ENCODE measurements at regions of chr10 and their contacts with region 1.

Region 1: GRCh38 chr10:11684717-11685645 is 57.2 kb upstream of the ECHDC3 start:
- DNase-seq: peak; percentile 45 to 89 (median 83)
- ATAC-seq: peak; percentile 86
- H3K4me3 ChIP-seq: peak overlapping the region; percentile 49
- H3K4me3 Mint-ChIP-seq: peak overlapping the region; percentile 82 to 91 (median 89)
- H3K27ac ChIP-seq: peak overlapping the region; percentile 78
- H3K27ac Mint-ChIP-seq: peak overlapping the region; percentile 92 to 99 (median 97)
- H3K4me1 ChIP-seq: peaks cover 26 to 51% of the 10 kb centered on the region in 2 donors
- H3K4me1 Mint-ChIP-seq: peaks cover 25 to 85% (median 78%) of the 10 kb centered on the region in 7 donors
- H3K27me3 ChIP-seq: no peaks in the 10 kb centered on the region
- H3K27me3 Mint-ChIP-seq: peaks cover 0 to 67% (median 0%) of the 10 kb centered on the region in 5 donors

Region 2: GRCh38 chr10:11403116-11403515 is 281.9 kb before region 1 on chr10:
- CTCF ChIA-PET with region 1: no interaction called
- POLR2A ChIA-PET with region 1: no interaction called
- intact Hi-C with region 1: loop called in 1 of 2 experiments (anchors 2 kb)
- DNase-seq: peak; percentile 25 to 90 (median 84)
- ATAC-seq: peak; percentile 95
- H3K4me3 ChIP-seq: peak overlapping the region; percentile 45
- H3K4me3 Mint-ChIP-seq: peak overlapping the region; percentile 74 to 87 (median 80)
- H3K27ac ChIP-seq: peak overlapping the region; percentile 57
- H3K27ac Mint-ChIP-seq: peak overlapping the region; percentile 89 to 98 (median 93)
- H3K4me1 ChIP-seq: peaks cover 45 to 48% of the 10 kb centered on the region in 2 donors
- H3K4me1 Mint-ChIP-seq: peaks cover 46 to 89% (median 81%) of the 10 kb centered on the region in 7 donors
- H3K27me3 ChIP-seq: no peaks in the 10 kb centered on the region
- H3K27me3 Mint-ChIP-seq: no peaks in the 10 kb centered on the region

Region 3: DNA sequence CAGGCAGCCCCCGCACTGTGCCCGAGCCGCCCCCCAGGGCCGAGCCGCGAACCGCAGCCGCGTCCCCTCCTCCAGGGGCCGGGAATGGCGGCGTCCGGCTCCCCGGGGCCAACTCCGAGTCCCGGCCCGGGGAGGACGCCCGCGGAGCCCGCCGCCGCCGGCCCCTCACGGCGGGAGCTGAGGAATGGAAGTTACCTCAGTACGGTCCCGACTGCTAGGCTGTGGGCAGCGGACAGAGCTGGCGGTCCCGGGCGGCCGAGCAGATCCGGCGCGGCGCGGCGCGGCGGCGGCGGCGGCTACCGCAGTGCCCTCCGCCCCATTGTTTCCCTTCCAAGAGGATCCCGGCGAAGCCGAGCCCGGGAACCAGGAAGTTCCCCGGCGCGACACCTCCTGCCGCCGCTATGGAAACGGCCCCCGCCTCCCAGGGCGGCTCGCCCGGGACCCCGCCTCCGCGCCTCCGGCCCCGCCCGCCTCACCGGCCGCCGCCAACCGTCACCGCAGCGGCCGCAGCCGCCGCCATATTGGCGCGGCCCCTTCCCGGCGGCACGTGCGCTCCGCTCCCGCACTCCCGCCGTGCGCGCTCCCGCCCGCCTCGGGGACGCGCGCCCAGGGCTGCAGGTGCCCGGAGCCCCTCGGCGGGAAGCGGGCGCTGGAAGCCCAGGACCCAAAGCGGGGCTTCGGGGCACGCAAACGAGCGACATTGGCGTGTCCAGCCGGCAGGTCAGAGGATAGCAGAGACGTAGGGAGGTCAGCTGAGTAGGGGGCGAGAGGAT is 73.5 kb before region 1 on chr10 and contains the start of gene USP6NL:
- CTCF ChIA-PET with region 1: interaction called, 3 read pairs
- POLR2A ChIA-PET with region 1: interaction called, 7 read pairs
- intact Hi-C with region 1: loop called (anchors 1 to 5 kb)
- DNase-seq: peak; percentile 44 to 75 (median 59)
- ATAC-seq: peak; percentile 84
- H3K4me3 ChIP-seq: peak within 1 kb of the TSS; percentile 70
- H3K4me3 Mint-ChIP-seq: peak within 1 kb of the TSS; percentile 86 to 98 (median 94)
- H3K27ac ChIP-seq: peak within 1 kb of the TSS; percentile 69
- H3K27ac Mint-ChIP-seq: peak within 1 kb of the TSS; percentile 62 to 97 (median 94)
- H3K4me1 ChIP-seq: peaks cover 0 to 9% of the 10 kb centered on the region in 2 donors
- H3K4me1 Mint-ChIP-seq: peaks cover 24 to 60% (median 50%) of the 10 kb centered on the region in 7 donors
- H3K27me3 ChIP-seq: no peaks in the 10 kb centered on the region
- H3K27me3 Mint-ChIP-seq: peaks cover 0 to 62% (median 0%) of the 10 kb centered on the region in 5 donors
- total RNA-seq, gene USP6NL: 0.70 to 6.6 (median 5.0) TPM

Region 4: DNA sequence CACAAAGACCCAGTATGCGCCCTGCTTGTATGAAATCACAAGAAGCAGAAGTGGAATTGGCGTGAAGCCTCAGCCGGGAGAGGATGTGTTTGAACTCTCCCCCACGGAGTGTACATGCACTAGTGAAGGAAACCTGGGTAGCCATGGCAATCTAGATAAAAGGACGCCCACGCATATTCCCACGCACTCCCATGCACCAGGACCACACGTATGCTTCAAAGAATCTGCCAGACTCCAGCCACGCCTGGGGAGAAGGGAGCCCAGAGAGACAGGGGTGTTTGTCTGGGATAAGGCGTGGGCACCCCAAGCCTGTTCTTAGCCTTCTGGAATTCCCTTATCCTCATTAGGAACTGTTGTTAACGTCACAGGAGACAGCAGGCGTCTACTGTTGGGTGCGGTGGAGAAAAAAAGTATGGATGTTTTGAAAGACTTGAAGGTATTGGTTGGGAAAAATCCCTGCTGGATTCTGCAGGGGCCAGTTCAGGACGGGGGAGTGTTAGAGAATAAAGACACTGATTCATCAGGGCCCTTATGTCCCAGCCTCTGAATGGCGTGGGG is 28.3 kb after region 1 on chr10:
- CTCF ChIA-PET with region 1: no interaction called
- POLR2A ChIA-PET with region 1: interaction called, 19 read pairs
- intact Hi-C with region 1: loop called (anchors 1 kb)
- DNase-seq: no peak
- ATAC-seq: no peak
- H3K4me3 ChIP-seq: no peak overlapping the region
- H3K4me3 Mint-ChIP-seq: peak overlapping the region in 1 of 10 donors; percentile 7
- H3K27ac ChIP-seq: no peak overlapping the region
- H3K27ac Mint-ChIP-seq: no peak overlapping the region
- H3K4me1 ChIP-seq: peaks cover 0 to 24% of the 10 kb centered on the region in 2 donors
- H3K4me1 Mint-ChIP-seq: peaks cover 11 to 37% (median 24%) of the 10 kb centered on the region in 7 donors
- H3K27me3 ChIP-seq: no peaks in the 10 kb centered on the region
- H3K27me3 Mint-ChIP-seq: peaks cover 4 to 83% (median 6%) of the 10 kb centered on the region in 5 donors

Region 5: GRCh38 chr10:11742005-11742778 is 57.2 kb after region 1 on chr10 and contains the start of gene ECHDC3:
- CTCF ChIA-PET with region 1: no interaction called
- POLR2A ChIA-PET with region 1: interaction called, 3 read pairs
- intact Hi-C with region 1: loop called in 1 of 2 experiments (anchors 5 kb)
- DNase-seq: peak; percentile 29 to 63 (median 43)
- ATAC-seq: peak; percentile 95
- H3K4me3 ChIP-seq: peak within 1 kb of the TSS; percentile 56
- H3K4me3 Mint-ChIP-seq: peak within 1 kb of the TSS; percentile 62 to 86 (median 76)
- H3K27ac ChIP-seq: peak within 1 kb of the TSS; percentile 20
- H3K27ac Mint-ChIP-seq: peak within 1 kb of the TSS in 4 of 9 donors; percentile 56 to 69 (median 66)
- H3K4me1 ChIP-seq: peaks cover 0 to 9% of the 10 kb centered on the region in 2 donors
- H3K4me1 Mint-ChIP-seq: peaks cover 2 to 27% (median 17%) of the 10 kb centered on the region in 7 donors
- H3K27me3 ChIP-seq: no peaks in the 10 kb centered on the region
- H3K27me3 Mint-ChIP-seq: peaks cover 9 to 49% (median 22%) of the 10 kb centered on the region in 5 donors
- total RNA-seq, gene ECHDC3: 0.74 to 2.5 TPM in 2 of 5 experiments, not detected in the others

Region 6: GRCh38 chr10:12042797-12043651 is 358.0 kb after region 1 on chr10 and contains the start of gene UPF2:
- CTCF ChIA-PET with region 1: no interaction called
- POLR2A ChIA-PET with region 1: no interaction called
- intact Hi-C with region 1: loop called in 1 of 2 experiments (anchors 2 kb)
- DNase-seq: peak; percentile 95 to 98 (median 97)
- ATAC-seq: peak; percentile 93
- H3K4me3 ChIP-seq: peak within 1 kb of the TSS; percentile 83
- H3K4me3 Mint-ChIP-seq: peak within 1 kb of the TSS; percentile 87 to 100 (median 95)
- H3K27ac ChIP-seq: peak within 1 kb of the TSS; percentile 92
- H3K27ac Mint-ChIP-seq: peak within 1 kb of the TSS; percentile 98 to 100 (median 99)
- H3K4me1 ChIP-seq: peaks cover 10 to 16% of the 10 kb centered on the region in 2 donors
- H3K4me1 Mint-ChIP-seq: peaks cover 13 to 47% (median 40%) of the 10 kb centered on the region in 7 donors
- H3K27me3 ChIP-seq: no peaks in the 10 kb centered on the region
- H3K27me3 Mint-ChIP-seq: peaks cover 0 to 3% (median 0%) of the 10 kb centered on the region in 5 donors
- total RNA-seq, gene UPF2: 27.2 to 40.5 (median 36.3) TPM

Region 7: GRCh38 chr10:12455774-12456173 is 770.8 kb after region 1 on chr10:
- CTCF ChIA-PET with region 1: no interaction called
- POLR2A ChIA-PET with region 1: no interaction called
- intact Hi-C with region 1: no loop called
- DNase-seq: no peak
- ATAC-seq: no peak
- H3K4me3 ChIP-seq: no peak overlapping the region
- H3K4me3 Mint-ChIP-seq: no peak overlapping the region
- H3K27ac ChIP-seq: no peak overlapping the region
- H3K27ac Mint-ChIP-seq: no peak overlapping the region
- H3K4me1 ChIP-seq: peaks cover 0 to under 1% of the 10 kb centered on the region in 2 donors
- H3K4me1 Mint-ChIP-seq: peaks cover 2 to 45% (median 26%) of the 10 kb centered on the region in 7 donors
- H3K27me3 ChIP-seq: no peaks in the 10 kb centered on the region
- H3K27me3 Mint-ChIP-seq: peaks cover 0 to 19% (median 0%) of the 10 kb centered on the region in 5 donors

Measured in naive thymus-derived CD4-positive, alpha-beta T cell (primary cell).